Activated naive CD8-positive, alpha-beta T cell treated with anti-CD3 and anti-CD28 coated beads, Interleukin-2, amount 10 ng/mL, durations not matched to agents 7 days and 5 days (primary cell): ENCODE measurements at regions of chr5 and their contacts with region 1.

Region 1: DNA sequence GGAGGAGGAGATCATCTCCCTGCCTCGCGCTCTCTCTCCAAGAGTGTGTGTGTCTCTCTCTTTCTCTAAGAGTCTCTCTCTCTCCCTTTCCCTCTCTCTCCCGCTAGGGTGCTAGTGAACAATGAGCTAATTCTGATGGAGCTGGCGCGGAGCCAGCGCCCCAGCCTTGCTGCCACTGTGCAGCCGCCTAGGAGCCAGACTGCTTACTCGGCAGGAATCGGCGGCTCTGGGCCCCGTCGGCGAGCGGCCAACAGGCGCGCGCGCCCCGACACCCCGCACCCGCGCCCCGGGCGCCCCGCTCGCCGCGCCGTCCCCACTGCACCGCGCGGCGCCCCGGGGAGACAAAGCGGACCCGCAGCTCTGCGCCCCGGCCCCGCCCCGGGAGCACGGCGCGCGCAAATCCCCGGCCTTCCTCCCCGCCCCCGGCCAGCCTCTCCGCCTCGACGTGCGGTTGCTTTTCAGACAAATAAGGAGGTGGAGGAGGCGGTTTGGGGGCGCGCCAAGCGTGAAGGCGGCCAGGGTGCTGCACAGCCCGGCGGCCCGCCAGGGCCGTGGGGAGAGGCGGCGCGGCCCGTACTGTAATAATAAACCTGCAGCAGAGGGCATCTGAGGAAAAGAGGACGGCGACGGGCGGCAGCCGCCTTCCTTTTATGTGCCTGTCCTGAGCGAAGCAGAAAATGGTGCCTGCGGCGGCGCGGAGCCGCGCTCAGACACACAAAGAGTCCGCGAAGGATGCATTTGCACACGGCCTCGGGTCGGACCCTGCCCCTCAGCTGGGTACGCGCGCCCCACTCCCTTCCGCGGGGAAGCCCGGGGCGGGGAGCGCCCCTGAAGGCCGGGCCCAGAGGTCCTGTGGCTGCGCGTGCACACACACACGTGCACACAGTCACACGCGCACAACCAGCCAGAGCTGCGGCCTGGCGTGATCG is 625 bp upstream of the NREP start:
- DNase-seq: peak; percentile 93
- ATAC-seq: peak; percentile 87
- H3K4me3 Mint-ChIP-seq: peak overlapping the region; percentile 90
- H3K27ac Mint-ChIP-seq: peak overlapping the region; percentile 89
- H3K4me1 Mint-ChIP-seq: peaks cover 20% of the 10 kb centered on the region
- H3K27me3 Mint-ChIP-seq: no peaks in the 10 kb centered on the region

Region 2: GRCh38 chr5:111530298-111530740 is 227.3 kb before region 1 on chr5:
- POLR2A ChIA-PET with region 1: interaction called, 10 read pairs
- DNase-seq: peak; percentile 70
- ATAC-seq: peak; percentile 100
- H3K4me3 Mint-ChIP-seq: peak overlapping the region; percentile 60
- H3K27ac Mint-ChIP-seq: peak overlapping the region; percentile 82
- H3K4me1 Mint-ChIP-seq: peaks cover 16% of the 10 kb centered on the region
- H3K27me3 Mint-ChIP-seq: no peaks in the 10 kb centered on the region

Region 3: GRCh38 chr5:111742177-111742994 is 15.2 kb before region 1 on chr5:
- POLR2A ChIA-PET with region 1: interaction called, 21 read pairs
- DNase-seq: no peak
- ATAC-seq: no peak
- H3K4me3 Mint-ChIP-seq: peak overlapping the region; percentile 79
- H3K27ac Mint-ChIP-seq: peak overlapping the region; percentile 67
- H3K4me1 Mint-ChIP-seq: peaks cover 23% of the 10 kb centered on the region
- H3K27me3 Mint-ChIP-seq: no peaks in the 10 kb centered on the region